ENCODE measurements at regions of chr6 and their contacts with region 1.

Region 1: GRCh38 chr6:87066449-87067333 is 28.2 kb downstream of the CGA start:
- DNase-seq: peak; percentile 28 to 55
- ATAC-seq: no peak
- H3K4me3 ChIP-seq: no peak overlapping the region
- H3K27ac ChIP-seq: no peak overlapping the region
- H3K4me1 ChIP-seq: no peaks in the 10 kb centered on the region
- CTCF ChIP-seq: peak; percentile 63
- EP300 ChIP-seq: no peak
- POLR2A ChIP-seq: no peak
- RAD21 ChIP-seq: peak; percentile 73 to 74; a peak in 4 of 5 replicates

Region 2: DNA sequence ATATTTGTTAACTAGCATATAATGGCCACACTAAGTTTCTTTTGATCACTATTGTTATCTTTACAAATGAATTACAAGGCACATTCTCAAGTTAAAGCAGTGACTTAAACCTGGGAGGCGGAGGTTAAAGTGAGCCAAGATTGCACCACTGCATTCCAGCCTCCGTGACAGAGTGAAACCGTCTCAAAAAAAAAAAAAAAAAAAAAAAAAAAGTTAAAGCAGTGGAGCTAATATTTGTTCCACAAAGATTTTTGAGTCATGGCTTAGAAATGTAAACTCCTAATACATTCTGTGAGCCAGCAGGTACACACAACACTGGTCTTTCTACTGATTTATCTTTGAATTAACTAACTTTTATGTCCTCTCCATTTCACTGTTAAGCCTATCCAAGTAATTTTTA is 351.0 kb before region 1 on chr6:
- CTCF ChIA-PET with region 1: no interaction called
- POLR2A ChIA-PET with region 1: no interaction called
- DNase-seq: no peak
- ATAC-seq: peak in 1 of 2 experiments; percentile 39; a peak in 1 of 6 replicates
- H3K4me3 ChIP-seq: no peak overlapping the region
- H3K27ac ChIP-seq: no peak overlapping the region
- H3K4me1 ChIP-seq: peaks cover 5% of the 10 kb centered on the region; the same call in 2 of the 3 replicates
- CTCF ChIP-seq: no peak
- EP300 ChIP-seq: no peak
- POLR2A ChIP-seq: no peak
- RAD21 ChIP-seq: no peak

Region 3: GRCh38 chr6:86871681-86872080 is 195.0 kb before region 1 on chr6:
- CTCF ChIA-PET with region 1: no interaction called
- POLR2A ChIA-PET with region 1: no interaction called
- DNase-seq: no peak
- ATAC-seq: no peak
- H3K4me3 ChIP-seq: no peak overlapping the region
- H3K27ac ChIP-seq: no peak overlapping the region
- H3K4me1 ChIP-seq: no peaks in the 10 kb centered on the region
- CTCF ChIP-seq: no peak
- EP300 ChIP-seq: no peak
- POLR2A ChIP-seq: no peak
- RAD21 ChIP-seq: no peak

Region 4: GRCh38 chr6:87078983-87079616 is 12.4 kb after region 1 on chr6:
- CTCF ChIA-PET with region 1: interaction called, 37 read pairs
- POLR2A ChIA-PET with region 1: no interaction called
- DNase-seq: peak; percentile 70
- ATAC-seq: peak; percentile 95 to 99
- H3K4me3 ChIP-seq: no peak overlapping the region
- H3K27ac ChIP-seq: no peak overlapping the region
- H3K4me1 ChIP-seq: no peaks in the 10 kb centered on the region
- CTCF ChIP-seq: peak; percentile 47
- EP300 ChIP-seq: no peak
- POLR2A ChIP-seq: no peak
- RAD21 ChIP-seq: peak in 1 of 2 experiments; percentile 22; a peak in 2 of 5 replicates